OCI-LY7 (cell line): ENCODE measurements at regions of chr3 and their contacts with region 1.

Region 1: DNA sequence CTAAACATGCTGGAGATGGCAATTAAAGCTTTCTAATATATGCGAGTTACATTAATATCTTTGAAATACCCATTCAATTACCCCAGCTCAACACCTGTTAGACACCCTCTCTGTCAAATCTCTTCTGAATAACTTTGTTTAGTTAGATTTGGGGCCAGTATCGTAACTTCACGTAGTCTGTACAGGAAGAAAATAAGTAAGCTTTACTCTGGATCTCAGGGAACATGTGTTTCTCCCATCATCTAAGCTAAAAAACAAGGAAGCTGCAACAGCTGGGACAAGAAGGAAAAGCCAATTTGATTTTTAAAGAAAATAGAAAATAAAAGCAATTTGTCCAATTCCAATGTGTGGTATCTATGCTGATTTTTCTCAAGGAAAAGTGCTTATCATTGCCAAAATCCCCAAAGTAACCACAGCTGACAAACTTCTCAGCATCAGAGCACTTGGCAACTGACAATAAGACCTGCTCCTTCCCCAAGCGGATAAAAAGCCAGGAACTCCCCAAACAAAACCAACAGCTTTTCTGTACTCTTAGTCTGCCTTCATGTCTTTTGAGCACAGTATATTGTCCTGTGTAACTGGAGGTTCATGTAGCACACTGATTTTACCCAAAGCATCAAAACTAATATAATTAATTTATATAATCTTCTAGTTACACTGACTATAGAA is 279.1 kb downstream of the ZBTB20 start:
- DNase-seq: no peak
- H3K4me3 ChIP-seq: no peak overlapping the region
- H3K27ac ChIP-seq: no peak overlapping the region
- H3K4me1 ChIP-seq: no peaks in the 10 kb centered on the region
- CTCF ChIP-seq: no peak

Region 2: GRCh38 chr3:114879059-114880031 is 11.4 kb after region 1 on chr3:
- CTCF ChIA-PET with region 1: no interaction called
- POLR2A ChIA-PET with region 1: interaction called, 12 read pairs
- intact Hi-C with region 1: no loop called
- DNase-seq: no peak
- H3K4me3 ChIP-seq: no peak overlapping the region
- H3K27ac ChIP-seq: no peak overlapping the region
- H3K4me1 ChIP-seq: no peaks in the 10 kb centered on the region
- CTCF ChIP-seq: no peak

Region 3: GRCh38 chr3:115284980-115285379 is 417.0 kb after region 1 on chr3:
- CTCF ChIA-PET with region 1: no interaction called
- POLR2A ChIA-PET with region 1: no interaction called
- intact Hi-C with region 1: no loop called
- DNase-seq: no peak
- H3K4me3 ChIP-seq: no peak overlapping the region
- H3K27ac ChIP-seq: no peak overlapping the region
- H3K4me1 ChIP-seq: no peaks in the 10 kb centered on the region
- CTCF ChIP-seq: no peak